RWPE1 (cell line): ENCODE measurements at regions of chr2 and their contacts with region 1.

Region 1: GRCh38 chr2:150981826-150982225 is 279.8 kb downstream of the RBM43 start:
- DNase-seq: no peak
- H3K27ac ChIP-seq: no peak overlapping the region
- CTCF ChIP-seq: no peak

Region 2: DNA sequence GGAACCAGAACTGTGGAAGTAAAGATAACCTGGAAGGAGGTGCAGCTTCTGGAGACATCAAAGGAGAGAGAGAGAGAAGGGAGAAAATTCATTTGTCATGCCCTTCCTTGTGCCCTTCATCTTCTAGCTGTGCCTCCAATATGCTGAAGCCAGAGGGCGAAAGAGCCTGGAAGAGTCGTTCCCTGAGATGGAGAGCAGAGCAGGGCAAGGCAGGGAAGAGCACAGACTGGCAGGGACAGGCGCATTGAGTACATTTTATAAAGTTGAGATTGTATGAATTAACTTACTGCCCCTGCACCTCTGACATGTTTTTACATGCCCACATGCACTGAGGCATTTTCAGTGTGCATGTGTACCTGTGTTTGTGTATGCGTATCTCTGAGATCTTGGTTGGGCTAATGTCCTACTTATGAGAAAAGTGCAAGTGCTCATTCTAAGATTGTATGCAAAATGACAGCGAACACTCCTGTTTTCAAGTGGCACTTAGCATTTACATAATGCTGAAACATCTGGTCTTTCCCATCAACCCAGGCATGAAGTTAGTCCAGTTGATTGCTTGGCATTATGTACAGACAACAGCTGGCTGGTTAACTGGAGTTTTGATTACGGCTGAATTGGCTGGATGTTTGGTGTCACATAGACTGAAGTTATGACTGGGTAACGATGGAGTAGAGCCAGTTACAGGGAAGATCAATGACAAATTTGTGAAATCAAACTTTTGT is 1370.6 kb before region 1 on chr2:
- CTCF ChIA-PET with region 1: interaction called, 10 read pairs
- POLR2A ChIA-PET with region 1: no interaction called
- DNase-seq: no peak
- H3K27ac ChIP-seq: no peak overlapping the region
- CTCF ChIP-seq: no peak

Region 3: DNA sequence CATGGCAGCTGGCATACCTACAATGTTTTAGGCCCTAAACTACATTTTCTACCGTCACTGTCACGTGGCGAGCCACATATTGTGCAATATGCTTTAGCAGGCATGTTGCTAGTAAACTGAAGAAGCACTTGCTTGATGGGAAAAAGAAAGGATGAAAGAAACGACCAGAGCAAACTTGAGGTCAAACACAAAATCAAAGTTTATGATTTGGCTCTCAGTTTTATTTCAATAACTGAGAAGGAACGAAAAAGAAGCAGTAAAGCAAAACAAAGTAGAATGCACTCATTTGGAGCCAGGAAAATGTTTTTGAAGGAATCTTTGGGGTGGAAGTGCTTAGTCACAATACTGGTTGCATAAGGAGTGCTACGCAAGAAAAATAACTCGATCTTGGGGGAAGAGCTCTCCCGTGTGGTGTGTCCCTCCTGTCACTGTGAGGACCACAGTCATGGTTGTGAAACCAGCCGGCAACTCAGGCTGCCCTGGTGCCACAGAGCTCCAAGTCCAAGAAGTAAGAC is 70.0 kb before region 1 on chr2:
- CTCF ChIA-PET with region 1: no interaction called
- POLR2A ChIA-PET with region 1: no interaction called
- DNase-seq: peak; percentile 61
- H3K27ac ChIP-seq: peak overlapping the region; percentile 66
- CTCF ChIP-seq: peak; percentile 28